HepG2 (cell line): ENCODE measurements at regions of chr2 and their contacts with region 1.

Region 1: GRCh38 chr2:118865106-118865505 is 17.7 kb upstream of the EN1 start:
- DNase-seq: peak; percentile 56
- ATAC-seq: peak; percentile 99
- H3K4me3 ChIP-seq: no peak overlapping the region
- H3K27ac ChIP-seq: no peak overlapping the region
- H3K4me1 ChIP-seq: no peaks in the 10 kb centered on the region
- H3K27me3 ChIP-seq: peaks cover 4 to 32% of the 10 kb centered on the region in 2 experiments; a peak in 3 of 5 replicates
- CTCF ChIP-seq: peak; percentile 81
- EP300 ChIP-seq: no peak
- POLR2A ChIP-seq: no peak
- RAD21 ChIP-seq: peak; percentile 81; the same call in 1 of the 2 replicates

Region 2: DNA sequence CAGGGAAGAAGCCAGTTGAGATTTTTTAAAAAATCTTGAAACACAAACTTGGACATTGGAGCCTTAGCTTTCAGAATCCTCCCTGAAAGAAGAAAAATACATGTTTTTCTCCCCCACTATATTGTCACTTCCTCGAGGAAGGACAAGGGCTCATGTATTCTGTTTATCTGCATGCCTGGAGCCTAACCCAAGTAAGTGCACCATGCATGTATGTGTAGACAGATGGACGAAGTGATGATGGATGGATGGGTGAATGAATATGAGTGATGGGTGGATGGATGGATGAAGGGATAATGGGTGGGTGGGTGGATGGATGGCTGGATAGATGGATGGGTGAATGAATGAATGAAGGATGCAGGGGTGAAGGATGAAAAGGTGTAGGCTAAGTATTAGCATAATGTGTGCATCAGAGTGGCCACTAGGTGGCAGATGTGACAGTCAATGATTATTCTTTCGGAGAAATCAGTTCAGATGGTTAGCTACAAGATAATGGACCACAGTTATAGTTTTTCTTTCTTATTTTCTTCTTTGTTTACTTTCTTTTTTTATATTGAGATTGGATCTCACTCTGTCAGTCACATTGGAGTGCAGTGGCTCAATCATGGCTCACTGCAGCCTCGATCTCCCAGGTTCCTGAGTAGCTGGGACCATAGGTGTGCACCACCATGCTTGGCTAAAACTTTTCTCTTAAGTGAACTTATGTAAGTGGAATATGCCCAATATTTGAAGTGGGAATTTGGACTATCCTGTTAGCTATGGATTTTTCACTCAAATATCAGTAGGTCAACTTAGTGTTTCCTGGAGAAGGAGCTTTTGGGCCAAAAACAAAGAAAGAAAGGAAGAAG is 832.7 kb before region 1 on chr2:
- CTCF ChIA-PET with region 1: interaction called, 3 read pairs
- POLR2A ChIA-PET with region 1: no interaction called
- in situ Hi-C with region 1: no loop called
- intact Hi-C with region 1: loop called (anchors 5 kb)
- DNase-seq: peak; percentile 44
- ATAC-seq: peak; percentile 94
- H3K4me3 ChIP-seq: no peak overlapping the region
- H3K27ac ChIP-seq: no peak overlapping the region
- H3K4me1 ChIP-seq: no peaks in the 10 kb centered on the region
- H3K27me3 ChIP-seq: peaks cover 0 to 27% of the 10 kb centered on the region in 2 experiments; a peak in 3 of 5 replicates
- CTCF ChIP-seq: peak; percentile 80
- EP300 ChIP-seq: no peak
- POLR2A ChIP-seq: no peak
- RAD21 ChIP-seq: peak; percentile 34; the same call in 1 of the 2 replicates

Region 3: GRCh38 chr2:118202707-118203303 is 662.3 kb before region 1 on chr2:
- CTCF ChIA-PET with region 1: interaction called, 3 read pairs
- POLR2A ChIA-PET with region 1: no interaction called
- in situ Hi-C with region 1: no loop called
- intact Hi-C with region 1: loop called (anchors 5 kb)
- DNase-seq: peak; percentile 54
- ATAC-seq: peak; percentile 96
- H3K4me3 ChIP-seq: no peak overlapping the region
- H3K27ac ChIP-seq: no peak overlapping the region
- H3K4me1 ChIP-seq: no peaks in the 10 kb centered on the region
- H3K27me3 ChIP-seq: no peaks in the 10 kb centered on the region
- CTCF ChIP-seq: peak; percentile 78
- EP300 ChIP-seq: no peak
- POLR2A ChIP-seq: no peak
- RAD21 ChIP-seq: 0 out of 2 replicates have a peak, but pooled peaks have one; percentile 45

Region 4: GRCh38 chr2:118221666-118222594 is 643.2 kb before region 1 on chr2:
- CTCF ChIA-PET with region 1: interaction called, 29 read pairs
- POLR2A ChIA-PET with region 1: no interaction called
- in situ Hi-C with region 1: loop called (anchors 5 kb)
- intact Hi-C with region 1: loop called (anchors 1 kb)
- DNase-seq: peak; percentile 61
- ATAC-seq: peak; percentile 97
- H3K4me3 ChIP-seq: no peak overlapping the region
- H3K27ac ChIP-seq: no peak overlapping the region
- H3K4me1 ChIP-seq: no peaks in the 10 kb centered on the region
- H3K27me3 ChIP-seq: peaks cover 2 to 14% of the 10 kb centered on the region in 2 experiments; a peak in 3 of 5 replicates
- CTCF ChIP-seq: peak; percentile 81
- EP300 ChIP-seq: no peak
- POLR2A ChIP-seq: no peak
- RAD21 ChIP-seq: peak; percentile 50; the same call in 1 of the 2 replicates

Region 5: DNA sequence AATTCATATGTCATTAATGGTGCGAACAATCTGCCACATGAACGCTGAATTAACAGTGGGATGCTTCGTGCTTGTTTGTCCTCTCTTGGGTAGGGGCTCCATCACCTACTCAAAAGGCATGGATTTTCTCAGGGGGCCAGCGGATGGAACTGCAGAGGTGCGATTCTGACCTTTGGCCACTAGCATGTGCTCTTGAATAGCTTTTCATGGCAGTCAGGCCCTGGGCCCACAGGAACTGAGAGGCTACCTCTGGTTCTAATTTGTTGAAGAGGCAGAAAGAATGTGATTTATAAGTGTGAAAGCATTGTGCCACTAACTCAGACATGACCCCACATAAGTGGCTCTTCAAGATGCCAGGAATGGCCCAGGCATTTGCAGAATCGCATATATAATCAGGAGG is 493.6 kb before region 1 on chr2:
- CTCF ChIA-PET with region 1: interaction called, 3 read pairs
- POLR2A ChIA-PET with region 1: no interaction called
- in situ Hi-C with region 1: no loop called
- intact Hi-C with region 1: loop called (anchors 2 kb)
- DNase-seq: peak; percentile 42
- ATAC-seq: peak; percentile 99
- H3K4me3 ChIP-seq: no peak overlapping the region
- H3K27ac ChIP-seq: no peak overlapping the region
- H3K4me1 ChIP-seq: no peaks in the 10 kb centered on the region
- H3K27me3 ChIP-seq: no peaks in the 10 kb centered on the region; a peak in 2 of 5 replicates
- CTCF ChIP-seq: peak; percentile 89
- EP300 ChIP-seq: no peak
- POLR2A ChIP-seq: no peak
- RAD21 ChIP-seq: peak; percentile 64

Region 6: GRCh38 chr2:118492335-118492734 is 372.8 kb before region 1 on chr2:
- CTCF ChIA-PET with region 1: no interaction called
- POLR2A ChIA-PET with region 1: no interaction called
- in situ Hi-C with region 1: no loop called
- intact Hi-C with region 1: loop called (anchors 2 kb)
- DNase-seq: peak; percentile 23
- ATAC-seq: no peak
- H3K4me3 ChIP-seq: no peak overlapping the region
- H3K27ac ChIP-seq: no peak overlapping the region
- H3K4me1 ChIP-seq: no peaks in the 10 kb centered on the region
- H3K27me3 ChIP-seq: no peaks in the 10 kb centered on the region; a peak in 1 of 5 replicates
- CTCF ChIP-seq: peak; percentile 29; the same call in 1 of the 2 replicates
- EP300 ChIP-seq: no peak
- POLR2A ChIP-seq: no peak
- RAD21 ChIP-seq: no peak

Region 7: DNA sequence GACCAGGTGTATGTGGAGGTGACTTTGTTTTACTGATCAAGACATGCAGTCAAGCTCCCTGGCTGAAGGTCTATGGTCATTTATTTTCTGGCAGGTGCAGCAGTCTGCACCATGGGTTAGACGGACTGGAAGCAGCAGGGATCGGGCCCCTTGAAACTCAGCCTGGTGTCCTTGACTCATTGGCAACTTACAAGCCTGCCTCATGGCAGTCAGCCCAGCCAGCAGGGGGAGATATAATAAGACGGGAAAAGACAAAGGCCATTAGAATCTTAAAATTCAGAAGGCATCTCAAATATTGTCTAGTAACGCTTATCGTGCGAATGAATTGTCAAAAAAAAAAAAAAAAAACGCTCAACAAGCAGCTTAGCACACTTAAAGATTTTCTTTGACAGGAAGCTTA is 325.8 kb before region 1 on chr2:
- CTCF ChIA-PET with region 1: no interaction called
- POLR2A ChIA-PET with region 1: no interaction called
- in situ Hi-C with region 1: no loop called
- intact Hi-C with region 1: loop called (anchors 1 kb)
- DNase-seq: peak; percentile 14
- ATAC-seq: peak; percentile 79
- H3K4me3 ChIP-seq: no peak overlapping the region
- H3K27ac ChIP-seq: no peak overlapping the region
- H3K4me1 ChIP-seq: no peaks in the 10 kb centered on the region
- H3K27me3 ChIP-seq: no peaks in the 10 kb centered on the region
- CTCF ChIP-seq: peak; percentile 49
- EP300 ChIP-seq: no peak
- POLR2A ChIP-seq: no peak
- RAD21 ChIP-seq: no peak

Region 8: DNA sequence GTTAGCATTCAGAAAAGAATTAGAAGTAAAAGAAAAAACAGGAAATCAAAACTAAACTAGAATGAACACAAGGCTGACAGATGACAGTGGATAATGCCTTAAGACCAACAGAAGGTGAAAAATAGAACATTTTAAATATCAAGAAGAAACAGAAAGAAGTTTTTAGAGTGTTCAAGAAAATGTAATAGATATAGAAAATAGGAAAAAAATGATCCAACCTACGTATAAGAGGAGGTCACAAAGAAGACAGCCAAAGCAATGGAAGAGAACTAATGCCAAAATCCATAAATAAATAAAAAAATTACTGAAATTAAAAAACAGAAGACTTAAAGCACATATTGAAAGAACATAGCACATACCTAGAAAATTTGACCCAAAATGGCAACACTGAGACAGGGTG is 24.9 kb after region 1 on chr2:
- CTCF ChIA-PET with region 1: no interaction called
- POLR2A ChIA-PET with region 1: no interaction called
- in situ Hi-C with region 1: no loop called
- intact Hi-C with region 1: no loop called
- DNase-seq: no peak
- ATAC-seq: no peak
- H3K4me3 ChIP-seq: no peak overlapping the region
- H3K27ac ChIP-seq: no peak overlapping the region
- H3K4me1 ChIP-seq: no peaks in the 10 kb centered on the region
- H3K27me3 ChIP-seq: no peaks in the 10 kb centered on the region; a peak in 1 of 5 replicates
- CTCF ChIP-seq: no peak
- EP300 ChIP-seq: no peak
- POLR2A ChIP-seq: no peak
- RAD21 ChIP-seq: no peak